MCF 10A (cell line): ENCODE measurements at regions of chr5 and their contacts with region 1.

Region 1: GRCh38 chr5:115579747-115580173 is 22.5 kb downstream of the TICAM2 start:
- DNase-seq: peak; percentile 43
- H3K4me3 Mint-ChIP-seq: no peak overlapping the region
- H3K27ac Mint-ChIP-seq: no peak overlapping the region
- H3K4me1 Mint-ChIP-seq: peaks cover 12% of the 10 kb centered on the region
- H3K27me3 Mint-ChIP-seq: no peaks in the 10 kb centered on the region
- CTCF ChIP-seq: no peak

Region 2: GRCh38 chr5:115169487-115170133 is 410.1 kb before region 1 on chr5 and contains the start of gene TRIM36:
- CTCF ChIA-PET with region 1: no interaction called
- POLR2A ChIA-PET with region 1: no interaction called
- intact Hi-C with region 1: loop called (anchors 10 kb)
- DNase-seq: peak; percentile 94
- H3K4me3 Mint-ChIP-seq: peak within 1 kb of the TSS; percentile 84
- H3K27ac Mint-ChIP-seq: peak within 1 kb of the TSS; percentile 35
- H3K4me1 Mint-ChIP-seq: peaks cover 6% of the 10 kb centered on the region
- H3K27me3 Mint-ChIP-seq: no peaks in the 10 kb centered on the region
- CTCF ChIP-seq: peak; percentile 8
- total RNA-seq, gene TRIM36: 4.9 and 7.1 TPM in 2 replicates

Region 3: DNA sequence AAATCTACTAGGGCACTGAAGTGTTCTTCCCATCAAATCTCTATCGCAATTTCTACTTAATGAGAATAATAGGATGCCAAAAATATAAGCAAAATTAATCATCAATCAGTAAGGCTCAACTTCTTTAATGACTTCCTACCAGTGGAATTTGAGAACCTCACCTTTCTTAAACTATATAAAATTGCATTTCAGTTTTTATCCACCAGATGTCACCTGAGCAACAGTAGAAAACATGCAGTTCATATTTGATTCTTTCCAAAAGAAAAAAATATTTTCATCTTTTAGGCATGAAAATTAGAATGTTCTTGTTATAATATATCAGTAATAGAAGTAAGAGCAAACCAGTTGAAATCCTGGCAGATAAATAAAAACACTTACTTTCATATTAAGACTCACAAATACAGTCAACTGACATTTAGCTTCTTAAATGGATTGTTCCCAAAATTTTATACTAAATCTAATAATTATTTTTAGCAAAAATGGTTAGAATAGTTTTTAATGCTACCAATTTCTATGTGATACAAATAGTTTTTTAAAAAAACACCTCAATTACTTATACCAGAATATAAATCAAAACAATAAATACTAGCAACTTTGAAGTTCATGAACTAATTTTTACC is 269.9 kb before region 1 on chr5:
- CTCF ChIA-PET with region 1: interaction called, 264 read pairs
- POLR2A ChIA-PET with region 1: interaction called, 36 read pairs
- intact Hi-C with region 1: loop called (anchors 1 kb)
- DNase-seq: peak; percentile 53
- H3K4me3 Mint-ChIP-seq: no peak overlapping the region
- H3K27ac Mint-ChIP-seq: no peak overlapping the region
- H3K4me1 Mint-ChIP-seq: no peaks in the 10 kb centered on the region
- H3K27me3 Mint-ChIP-seq: no peaks in the 10 kb centered on the region
- CTCF ChIP-seq: peak; percentile 66

Region 4: GRCh38 chr5:115551415-115551814 is 28.3 kb before region 1 on chr5:
- CTCF ChIA-PET with region 1: interaction called, 20 read pairs
- POLR2A ChIA-PET with region 1: interaction called, 3 read pairs
- intact Hi-C with region 1: no loop called
- DNase-seq: peak; percentile 10
- H3K4me3 Mint-ChIP-seq: no peak overlapping the region
- H3K27ac Mint-ChIP-seq: no peak overlapping the region
- H3K4me1 Mint-ChIP-seq: peaks cover 26% of the 10 kb centered on the region
- H3K27me3 Mint-ChIP-seq: no peaks in the 10 kb centered on the region
- CTCF ChIP-seq: no peak

Region 5: DNA sequence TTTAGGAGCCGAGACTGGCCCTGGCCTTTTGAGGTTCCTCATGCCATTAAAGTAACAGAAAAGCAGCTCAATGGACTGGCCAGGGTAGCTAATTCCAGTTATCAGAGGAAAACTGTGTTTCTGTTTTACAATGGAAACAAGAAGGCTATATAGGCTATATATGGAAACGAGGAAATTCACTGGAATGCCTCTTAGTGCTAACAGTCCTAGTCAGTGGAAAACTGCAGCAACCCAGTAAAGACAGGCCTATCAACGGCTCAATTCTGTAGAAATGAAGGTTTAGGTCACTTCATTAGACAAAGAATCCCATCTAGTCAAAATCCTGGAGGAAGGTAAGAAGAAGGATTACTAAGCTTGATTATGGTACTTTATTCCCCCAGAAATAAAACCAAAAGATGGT is 25.7 kb after region 1 on chr5:
- CTCF ChIA-PET with region 1: no interaction called
- POLR2A ChIA-PET with region 1: no interaction called
- intact Hi-C with region 1: no loop called
- DNase-seq: no peak
- H3K4me3 Mint-ChIP-seq: no peak overlapping the region
- H3K27ac Mint-ChIP-seq: no peak overlapping the region
- H3K4me1 Mint-ChIP-seq: peaks cover 20% of the 10 kb centered on the region
- H3K27me3 Mint-ChIP-seq: no peaks in the 10 kb centered on the region
- CTCF ChIP-seq: no peak

Region 6: GRCh38 chr5:115616472-115616871 is 36.7 kb after region 1 on chr5:
- CTCF ChIA-PET with region 1: no interaction called
- POLR2A ChIA-PET with region 1: no interaction called
- intact Hi-C with region 1: no loop called
- DNase-seq: no peak
- H3K4me3 Mint-ChIP-seq: no peak overlapping the region
- H3K27ac Mint-ChIP-seq: no peak overlapping the region
- H3K4me1 Mint-ChIP-seq: peaks cover 3% of the 10 kb centered on the region
- H3K27me3 Mint-ChIP-seq: no peaks in the 10 kb centered on the region
- CTCF ChIP-seq: no peak

Region 7: DNA sequence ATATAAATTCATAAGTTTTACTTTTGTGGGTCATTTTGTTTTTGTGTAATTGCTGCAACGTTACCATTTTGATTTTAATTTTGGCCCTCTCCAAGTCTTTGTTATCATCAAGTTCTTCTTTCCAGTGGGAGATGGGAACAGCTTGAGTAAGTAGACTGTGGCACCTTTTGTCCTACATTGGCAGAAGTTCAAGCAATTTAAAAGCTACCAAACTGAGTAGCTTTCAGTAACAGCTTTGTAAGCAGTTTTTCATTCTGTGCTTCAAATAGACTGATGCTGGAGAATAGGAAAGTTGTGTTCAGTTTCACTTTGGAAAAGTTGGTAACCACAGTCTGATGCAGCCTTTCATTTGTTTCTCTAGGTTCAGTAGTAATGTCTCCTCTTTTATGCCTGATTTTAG is 93.8 kb after region 1 on chr5:
- CTCF ChIA-PET with region 1: no interaction called
- POLR2A ChIA-PET with region 1: no interaction called
- intact Hi-C with region 1: no loop called
- DNase-seq: no peak
- H3K4me3 Mint-ChIP-seq: no peak overlapping the region
- H3K27ac Mint-ChIP-seq: no peak overlapping the region
- H3K4me1 Mint-ChIP-seq: no peaks in the 10 kb centered on the region
- H3K27me3 Mint-ChIP-seq: peaks cover 12% of the 10 kb centered on the region
- CTCF ChIP-seq: no peak